ENCODE measurements at regions of chr14 and their contacts with region 1.

Region 1: GRCh38 chr14:70027785-70028428 is 148.7 kb downstream of the SMOC1 start:
- DNase-seq: peak; percentile 56
- H3K4me3 ChIP-seq: no peak overlapping the region
- H3K27ac ChIP-seq: no peak overlapping the region
- H3K4me1 ChIP-seq: no peaks in the 10 kb centered on the region
- H3K27me3 ChIP-seq: peaks cover 0 to 2% of the 10 kb centered on the region in 2 experiments
- CTCF ChIP-seq: peak; percentile 91 to 92
- POLR2A ChIP-seq: no peak

Region 2: DNA sequence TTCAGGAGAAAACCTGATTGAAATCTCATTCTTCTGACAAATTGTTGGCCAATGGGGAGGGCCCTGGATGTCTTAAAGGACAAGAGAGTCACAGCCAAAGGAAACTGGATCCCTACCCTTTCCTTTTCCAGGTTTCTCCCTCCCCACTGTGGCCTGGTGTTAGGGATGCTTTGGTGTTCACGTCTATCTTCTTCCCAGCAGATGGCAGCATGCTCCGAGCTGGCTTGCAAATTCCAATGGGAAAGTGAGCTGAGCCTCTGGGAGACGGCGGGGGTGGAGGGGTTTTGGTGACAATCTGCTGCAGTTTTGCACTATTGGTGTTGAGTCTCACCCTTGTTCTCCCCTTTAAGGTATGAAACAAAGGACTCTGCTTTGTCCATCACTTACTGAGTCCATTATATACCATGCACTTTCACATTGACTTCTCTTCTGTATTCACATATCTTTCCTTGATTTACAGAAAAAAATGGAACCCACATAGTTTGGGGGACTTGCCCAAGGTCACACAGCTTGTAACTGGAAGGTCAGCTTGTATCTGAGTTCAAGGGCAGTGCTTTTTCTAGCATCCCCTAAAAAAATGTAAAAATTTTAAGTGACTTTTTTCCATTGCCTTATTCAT is 492.6 kb before region 1 on chr14:
- CTCF ChIA-PET with region 1: interaction called, 14 read pairs
- POLR2A ChIA-PET with region 1: no interaction called
- dilution Hi-C with region 1: no loop called
- intact Hi-C with region 1: no loop called
- DNase-seq: peak; percentile 34
- H3K4me3 ChIP-seq: no peak overlapping the region
- H3K27ac ChIP-seq: no peak overlapping the region
- H3K4me1 ChIP-seq: no peaks in the 10 kb centered on the region
- H3K27me3 ChIP-seq: peaks cover 18 to 26% of the 10 kb centered on the region in 2 experiments
- CTCF ChIP-seq: peak; percentile 61 to 83
- POLR2A ChIP-seq: no peak

Region 3: DNA sequence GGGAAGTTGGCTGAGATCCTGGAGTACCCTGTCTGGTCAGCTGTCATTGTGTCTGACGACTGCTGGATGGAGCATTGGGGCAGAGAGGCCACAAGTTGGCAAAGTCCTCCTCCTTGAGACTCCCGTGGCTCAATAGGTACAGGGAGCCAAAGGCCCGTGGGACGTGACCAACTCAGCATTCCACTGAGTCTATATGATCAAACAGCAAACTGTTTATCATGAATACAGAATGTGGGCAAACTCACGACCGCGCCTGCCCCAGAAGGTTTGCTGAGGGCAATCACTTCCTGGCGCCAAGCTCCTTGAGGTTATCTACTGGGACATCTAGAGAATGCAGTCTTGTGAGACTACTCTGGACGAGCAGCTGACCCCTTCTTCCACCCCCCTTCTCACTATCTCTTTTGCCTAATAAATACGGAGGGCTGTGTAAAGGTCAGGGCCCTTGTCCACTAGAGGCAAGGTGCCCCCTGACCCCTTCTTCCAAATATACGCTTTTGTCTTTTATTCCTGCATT is 216.5 kb before region 1 on chr14:
- CTCF ChIA-PET with region 1: interaction called, 255 read pairs
- POLR2A ChIA-PET with region 1: no interaction called
- dilution Hi-C with region 1: no loop called
- intact Hi-C with region 1: no loop called
- DNase-seq: no peak
- H3K4me3 ChIP-seq: no peak overlapping the region
- H3K27ac ChIP-seq: no peak overlapping the region
- H3K4me1 ChIP-seq: no peaks in the 10 kb centered on the region
- H3K27me3 ChIP-seq: peaks cover 0 to 12% of the 10 kb centered on the region in 2 experiments
- CTCF ChIP-seq: no peak
- POLR2A ChIP-seq: no peak

Region 4: DNA sequence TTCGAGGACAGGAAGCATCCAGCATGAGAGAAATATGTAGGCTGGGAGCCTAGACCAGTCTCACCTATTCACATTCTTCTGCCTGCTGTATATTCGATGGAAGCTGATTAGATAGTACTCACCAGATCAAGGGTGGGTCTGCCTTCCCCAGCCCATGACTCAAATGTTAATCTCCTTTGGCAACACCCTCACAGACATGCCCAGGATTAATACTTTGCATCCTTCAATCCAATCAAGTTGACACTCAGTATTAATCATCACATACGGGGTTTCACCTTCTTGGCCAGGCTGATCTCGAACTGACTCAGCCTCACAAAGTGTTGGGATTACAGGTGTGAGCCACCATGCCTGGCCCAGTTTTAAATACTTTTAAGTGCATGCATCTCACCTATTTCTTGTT is 200.3 kb before region 1 on chr14:
- CTCF ChIA-PET with region 1: interaction called, 12 read pairs
- POLR2A ChIA-PET with region 1: no interaction called
- dilution Hi-C with region 1: no loop called
- intact Hi-C with region 1: no loop called
- DNase-seq: no peak
- H3K4me3 ChIP-seq: no peak overlapping the region
- H3K27ac ChIP-seq: no peak overlapping the region
- H3K4me1 ChIP-seq: no peaks in the 10 kb centered on the region
- H3K27me3 ChIP-seq: no peaks in the 10 kb centered on the region
- CTCF ChIP-seq: no peak
- POLR2A ChIP-seq: no peak

Region 5: DNA sequence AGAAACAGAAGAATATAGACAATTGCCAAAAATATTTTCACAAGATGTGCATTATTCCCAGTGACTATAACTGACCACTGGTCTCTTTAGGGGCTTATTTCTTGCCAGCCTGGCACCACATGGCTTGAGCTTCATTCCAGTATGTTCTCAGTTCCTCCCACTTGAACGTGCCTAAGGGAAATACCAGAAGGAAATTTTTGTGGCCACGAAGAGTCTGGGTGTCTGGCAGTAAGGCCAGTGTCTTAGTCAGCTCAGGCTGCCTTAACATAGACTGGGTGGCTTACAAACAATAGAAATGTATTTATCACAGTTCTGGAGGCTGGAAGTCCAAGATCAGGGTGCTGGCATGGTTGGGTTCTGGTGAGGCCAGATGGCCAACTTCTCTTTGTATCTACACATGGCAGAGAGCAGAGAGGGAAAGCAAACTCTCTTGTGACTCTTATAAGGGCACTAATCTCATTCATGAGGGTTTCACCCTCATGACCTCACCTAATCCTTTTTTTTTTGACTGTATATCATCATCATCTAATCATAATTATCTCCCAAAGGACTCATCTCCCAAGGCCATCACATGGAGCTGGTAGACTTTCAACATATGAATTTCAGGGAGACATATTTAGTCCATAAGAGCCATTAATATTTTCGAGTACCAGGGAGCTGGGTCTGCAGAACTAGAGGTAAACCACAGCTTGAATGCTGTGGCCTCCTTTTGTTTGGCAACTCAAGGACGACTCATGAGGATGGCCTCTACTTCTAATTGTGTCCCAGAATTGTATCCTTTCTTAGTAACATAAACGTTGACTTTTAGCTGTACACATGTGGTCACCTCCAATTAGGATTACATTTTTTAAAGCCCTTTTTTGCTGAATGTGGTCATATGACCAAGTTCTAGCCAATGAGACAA is 153.8 kb before region 1 on chr14:
- CTCF ChIA-PET with region 1: interaction called, 110 read pairs
- POLR2A ChIA-PET with region 1: no interaction called
- dilution Hi-C with region 1: no loop called
- intact Hi-C with region 1: loop called (anchors 1 kb)
- DNase-seq: no peak
- H3K4me3 ChIP-seq: no peak overlapping the region
- H3K27ac ChIP-seq: no peak overlapping the region
- H3K4me1 ChIP-seq: no peaks in the 10 kb centered on the region
- H3K27me3 ChIP-seq: peaks cover 8 to 10% of the 10 kb centered on the region in 2 experiments
- CTCF ChIP-seq: no peak
- POLR2A ChIP-seq: no peak

Region 6: DNA sequence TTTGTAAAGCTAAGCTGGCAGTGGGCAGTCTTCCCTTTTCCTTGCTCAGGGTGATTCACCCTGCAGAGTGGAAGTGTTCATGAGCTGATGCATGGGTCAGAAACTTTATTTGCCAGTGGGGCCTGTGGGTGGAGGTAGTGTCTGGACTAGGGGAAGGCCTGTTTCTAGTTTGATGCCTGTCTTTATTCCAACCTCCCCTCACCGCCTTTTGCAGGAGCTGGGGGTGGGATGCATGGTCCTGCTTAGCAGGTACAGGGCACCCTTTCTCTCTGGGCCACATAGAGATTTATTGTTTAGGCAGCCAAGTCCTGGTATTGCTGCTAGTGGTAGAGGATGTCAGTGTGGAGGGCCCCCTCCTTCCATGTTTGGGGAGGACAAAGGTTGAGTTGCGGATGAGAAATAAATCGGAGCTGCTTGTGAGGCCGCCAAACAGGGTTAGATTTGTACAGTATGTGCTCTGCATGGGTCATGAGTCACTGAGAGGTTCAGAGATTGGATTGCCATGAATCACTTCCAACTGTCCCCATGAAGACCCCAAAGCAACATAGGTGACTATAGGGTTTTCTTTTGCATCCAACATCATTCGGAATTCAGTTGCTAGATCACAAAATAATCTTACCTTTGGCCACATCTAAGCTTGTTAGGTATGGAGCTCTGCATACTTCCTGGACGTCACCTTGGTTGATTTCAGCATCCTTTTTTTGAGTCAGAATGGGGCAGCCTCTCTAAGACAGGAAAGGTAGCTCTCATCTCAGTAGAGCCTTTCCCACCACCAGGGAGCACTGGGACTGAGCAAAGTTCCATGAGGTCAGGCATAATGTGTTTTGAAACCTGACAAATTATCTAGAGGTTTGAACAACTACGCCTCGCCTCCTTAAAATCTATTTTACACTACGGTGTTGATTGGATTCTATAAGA is 139.9 kb before region 1 on chr14:
- CTCF ChIA-PET with region 1: interaction called, 12 read pairs
- POLR2A ChIA-PET with region 1: no interaction called
- dilution Hi-C with region 1: no loop called
- intact Hi-C with region 1: no loop called
- DNase-seq: no peak
- H3K4me3 ChIP-seq: no peak overlapping the region
- H3K27ac ChIP-seq: no peak overlapping the region
- H3K4me1 ChIP-seq: no peaks in the 10 kb centered on the region
- H3K27me3 ChIP-seq: peaks cover 0 to 2% of the 10 kb centered on the region in 2 experiments
- CTCF ChIP-seq: no peak
- POLR2A ChIP-seq: no peak

Region 7: DNA sequence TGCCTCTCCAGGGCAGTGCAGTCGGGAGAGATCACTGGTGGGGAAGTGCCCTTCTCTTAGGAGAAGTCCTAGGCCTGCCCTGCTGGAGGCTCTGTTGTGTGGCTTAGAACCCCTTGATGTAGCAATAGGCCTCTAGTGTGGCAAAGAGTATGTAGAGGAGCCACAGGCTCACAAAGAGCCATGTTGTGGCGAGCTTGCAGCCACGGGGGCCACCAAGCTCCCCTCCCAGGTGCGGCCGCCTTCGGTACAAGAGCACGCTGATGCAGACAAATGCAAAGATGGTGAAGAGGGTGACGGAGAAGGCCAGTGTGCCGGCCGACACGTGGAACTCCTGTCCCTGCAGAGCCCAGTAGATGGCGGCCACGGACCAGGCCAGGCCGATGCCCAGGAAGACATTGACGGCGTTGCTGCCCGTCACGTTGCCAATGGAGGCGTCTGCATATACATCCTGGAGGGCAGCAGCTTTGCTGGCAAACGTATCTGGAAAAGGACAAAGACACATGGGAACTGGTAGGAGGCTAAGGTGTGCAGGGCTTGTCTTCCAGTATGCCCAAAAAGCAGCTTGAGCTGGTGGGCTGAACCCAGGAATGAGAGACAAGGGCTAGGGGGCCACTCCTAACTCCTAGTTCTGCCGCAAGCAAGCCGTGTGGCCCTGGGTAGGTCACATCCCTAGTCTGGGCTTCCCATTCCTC is 18.1 kb after region 1 on chr14:
- CTCF ChIA-PET with region 1: interaction called, 10 read pairs
- POLR2A ChIA-PET with region 1: no interaction called
- dilution Hi-C with region 1: no loop called
- intact Hi-C with region 1: no loop called
- DNase-seq: peak; percentile 56
- H3K4me3 ChIP-seq: no peak overlapping the region
- H3K27ac ChIP-seq: no peak overlapping the region
- H3K4me1 ChIP-seq: no peaks in the 10 kb centered on the region
- H3K27me3 ChIP-seq: peaks cover 0 to 3% of the 10 kb centered on the region in 2 experiments
- CTCF ChIP-seq: peak; percentile 56 to 91
- POLR2A ChIP-seq: no peak

Region 8: DNA sequence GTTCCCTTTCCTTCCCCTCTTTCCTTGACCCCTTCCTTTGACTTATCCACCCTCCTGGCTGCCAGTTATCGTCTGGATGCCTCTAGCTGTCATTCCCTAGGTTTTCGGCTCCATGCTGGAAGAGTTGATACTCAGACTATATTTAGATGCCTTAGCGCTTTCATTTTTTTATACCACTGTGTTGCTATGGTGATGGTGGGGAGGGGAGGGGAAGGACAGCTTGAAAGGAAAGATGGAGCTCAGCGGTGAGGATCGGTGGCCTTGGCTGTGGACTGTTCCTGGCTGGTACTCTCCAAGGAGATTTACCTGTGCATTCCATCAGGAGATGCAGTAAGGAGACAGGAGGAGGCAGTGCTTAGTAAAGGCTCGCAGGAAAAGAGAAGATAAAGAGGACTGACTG is 52.2 kb after region 1 on chr14:
- CTCF ChIA-PET with region 1: no interaction called
- POLR2A ChIA-PET with region 1: no interaction called
- dilution Hi-C with region 1: no loop called
- intact Hi-C with region 1: no loop called
- DNase-seq: no peak
- H3K4me3 ChIP-seq: no peak overlapping the region
- H3K27ac ChIP-seq: no peak overlapping the region
- H3K4me1 ChIP-seq: no peaks in the 10 kb centered on the region
- H3K27me3 ChIP-seq: no peaks in the 10 kb centered on the region
- CTCF ChIP-seq: no peak
- POLR2A ChIP-seq: no peak